Sigmoid colon (tissue), 7 donors: ENCODE measurements at regions of chr2 and their contacts with region 1.

Region 1: GRCh38 chr2:72150157-72150865 is 2.6 kb upstream of the CYP26B1 start:
- DNase-seq: peak; percentile 88
- H3K4me3 ChIP-seq: peak overlapping the region in 3 of 4 donors; percentile 43 to 55 (median 44)
- H3K27ac ChIP-seq: no peak overlapping the region
- H3K4me1 ChIP-seq: peaks cover 0 to 48% (median 44%) of the 10 kb centered on the region in 4 donors
- H3K27me3 ChIP-seq: peaks cover 38 to 85% (median 41%) of the 10 kb centered on the region in 3 donors
- CTCF ChIP-seq: peak; percentile 81 to 90 (median 84)
- EP300 ChIP-seq: no peak
- POLR2A ChIP-seq: no peak

Region 2: DNA sequence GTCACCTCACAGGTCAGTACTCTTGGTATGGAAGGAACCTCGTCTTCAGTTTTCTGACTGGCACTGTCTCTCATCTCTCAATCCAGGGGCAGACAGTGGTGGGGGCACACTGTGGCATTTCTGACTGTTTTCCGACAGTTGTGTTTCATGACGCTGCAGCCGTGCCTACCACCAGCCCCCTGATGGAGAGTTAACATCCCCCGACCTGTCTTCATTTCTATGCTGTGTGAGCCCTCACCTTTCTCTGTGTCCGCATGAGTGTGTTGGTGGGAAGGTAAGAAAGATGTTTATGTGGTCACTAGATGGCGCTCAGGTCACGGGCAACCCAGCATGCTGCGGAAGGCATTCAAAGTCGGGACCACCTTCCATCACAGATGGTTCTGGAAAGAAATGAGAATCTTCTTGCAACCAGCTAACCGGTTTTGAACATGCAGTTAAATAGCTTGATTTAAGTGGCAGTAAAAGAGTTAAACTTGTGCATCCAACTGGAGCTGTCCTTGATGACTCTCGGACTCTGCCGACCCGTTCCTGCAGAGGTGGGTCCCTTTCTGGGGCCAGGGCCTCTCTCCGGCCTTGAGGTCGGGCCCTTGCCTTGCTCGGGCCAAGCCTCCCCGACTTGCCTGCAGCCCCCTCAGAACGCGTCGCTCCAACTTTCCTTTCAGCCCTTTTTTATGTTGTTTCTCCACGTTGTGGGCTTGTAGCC is 604.6 kb before region 1 on chr2:
- intact Hi-C with region 1: loop called (anchors 1 kb)
- DNase-seq: peak; percentile 70
- H3K4me3 ChIP-seq: no peak overlapping the region
- H3K27ac ChIP-seq: no peak overlapping the region
- H3K4me1 ChIP-seq: no peaks in the 10 kb centered on the region
- H3K27me3 ChIP-seq: no peaks in the 10 kb centered on the region
- CTCF ChIP-seq: peak; percentile 28 to 61 (median 46)
- EP300 ChIP-seq: no peak
- POLR2A ChIP-seq: no peak

Region 3: GRCh38 chr2:71614976-71615766 is 535.1 kb before region 1 on chr2:
- intact Hi-C with region 1: loop called (anchors 5 kb)
- DNase-seq: peak; percentile 96
- H3K4me3 ChIP-seq: no peak overlapping the region
- H3K27ac ChIP-seq: peak overlapping the region; percentile 54 to 66 (median 62)
- H3K4me1 ChIP-seq: peaks cover 0 to 22% (median 21%) of the 10 kb centered on the region in 4 donors
- H3K27me3 ChIP-seq: no peaks in the 10 kb centered on the region
- CTCF ChIP-seq: no peak
- EP300 ChIP-seq: no peak
- POLR2A ChIP-seq: no peak

Region 4: GRCh38 chr2:71923887-71924533 is 226.3 kb before region 1 on chr2:
- intact Hi-C with region 1: loop called (anchors 1 kb)
- DNase-seq: no peak
- H3K4me3 ChIP-seq: no peak overlapping the region
- H3K27ac ChIP-seq: peak overlapping the region in 1 of 4 donors; percentile 74
- H3K4me1 ChIP-seq: peaks cover 0 to 28% (median 21%) of the 10 kb centered on the region in 4 donors
- H3K27me3 ChIP-seq: no peaks in the 10 kb centered on the region
- CTCF ChIP-seq: peak; percentile 65 to 88 (median 74)
- EP300 ChIP-seq: no peak
- POLR2A ChIP-seq: no peak

Region 5: GRCh38 chr2:72745679-72746368 is 595.5 kb after region 1 on chr2:
- intact Hi-C with region 1: loop called (anchors 5 kb)
- DNase-seq: no peak
- H3K4me3 ChIP-seq: no peak overlapping the region
- H3K27ac ChIP-seq: no peak overlapping the region
- H3K4me1 ChIP-seq: peaks cover 0 to 5% (median 0%) of the 10 kb centered on the region in 4 donors
- H3K27me3 ChIP-seq: no peaks in the 10 kb centered on the region
- CTCF ChIP-seq: peak in 3 of 4 experiments; percentile 27 to 55 (median 37)
- EP300 ChIP-seq: no peak
- POLR2A ChIP-seq: no peak